Caco-2 (cell line): ENCODE measurements at regions of chr20 and their contacts with region 1.

Region 1: DNA sequence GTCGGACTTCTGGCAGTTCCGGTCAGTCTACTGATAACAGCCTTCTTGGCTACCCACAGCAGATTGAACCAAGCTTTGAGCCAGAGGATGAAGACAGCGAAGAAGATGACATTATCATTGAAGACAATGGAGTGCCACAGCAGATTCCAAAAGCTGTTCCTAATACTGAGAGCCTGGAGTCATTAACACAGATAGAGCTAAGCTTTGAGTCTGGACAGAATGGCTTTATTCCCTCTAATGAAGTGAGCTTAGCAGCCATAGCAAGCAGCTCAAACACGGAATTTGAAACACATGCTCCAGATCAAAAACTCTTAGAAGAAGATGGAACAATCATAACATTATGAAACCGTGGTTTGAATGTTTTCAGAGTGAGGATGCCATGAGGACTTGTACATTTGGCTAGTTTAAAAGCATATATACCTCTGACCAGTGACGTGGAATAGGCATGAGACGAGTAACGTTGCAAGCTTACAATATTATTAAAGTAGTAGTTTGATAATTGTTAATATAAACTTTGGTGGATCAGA is 18.8 kb downstream of the PARD6B start:
- DNase-seq: peak in 1 of 2 experiments; percentile 21
- H3K4me3 ChIP-seq: no peak overlapping the region
- H3K4me3 Mint-ChIP-seq: no peak overlapping the region
- H3K27ac Mint-ChIP-seq: peak overlapping the region; percentile 57
- H3K4me1 ChIP-seq: peaks cover 60% of the 10 kb centered on the region
- H3K4me1 Mint-ChIP-seq: peaks cover 59% of the 10 kb centered on the region
- H3K27me3 ChIP-seq: no peaks in the 10 kb centered on the region
- H3K27me3 Mint-ChIP-seq: no peaks in the 10 kb centered on the region
- CTCF ChIP-seq: no peak

Region 2: GRCh38 chr20:50534567-50535551 is 215.3 kb before region 1 on chr20:
- CTCF ChIA-PET with region 1: no interaction called
- POLR2A ChIA-PET with region 1: no interaction called
- intact Hi-C with region 1: no loop called
- DNase-seq: no peak
- H3K4me3 ChIP-seq: no peak overlapping the region
- H3K4me3 Mint-ChIP-seq: no peak overlapping the region
- H3K27ac Mint-ChIP-seq: peak overlapping the region; percentile 2
- H3K4me1 ChIP-seq: peaks cover 34% of the 10 kb centered on the region
- H3K4me1 Mint-ChIP-seq: peaks cover 37% of the 10 kb centered on the region
- H3K27me3 ChIP-seq: no peaks in the 10 kb centered on the region
- H3K27me3 Mint-ChIP-seq: no peaks in the 10 kb centered on the region
- CTCF ChIP-seq: no peak

Region 3: GRCh38 chr20:50670126-50670862 is 79.9 kb before region 1 on chr20:
- CTCF ChIA-PET with region 1: interaction called, 87 read pairs
- POLR2A ChIA-PET with region 1: interaction called, 3 read pairs
- intact Hi-C with region 1: no loop called
- DNase-seq: peak; percentile 86 to 89
- H3K4me3 ChIP-seq: no peak overlapping the region
- H3K4me3 Mint-ChIP-seq: no peak overlapping the region
- H3K27ac Mint-ChIP-seq: peak overlapping the region; percentile 71
- H3K4me1 ChIP-seq: peaks cover 82% of the 10 kb centered on the region
- H3K4me1 Mint-ChIP-seq: peaks cover 76% of the 10 kb centered on the region
- H3K27me3 ChIP-seq: no peaks in the 10 kb centered on the region
- H3K27me3 Mint-ChIP-seq: no peaks in the 10 kb centered on the region
- CTCF ChIP-seq: no peak

Region 4: GRCh38 chr20:50701551-50701963 is 48.7 kb before region 1 on chr20:
- CTCF ChIA-PET with region 1: interaction called, 10 read pairs
- POLR2A ChIA-PET with region 1: no interaction called
- intact Hi-C with region 1: no loop called
- DNase-seq: no peak
- H3K4me3 ChIP-seq: no peak overlapping the region
- H3K4me3 Mint-ChIP-seq: no peak overlapping the region
- H3K27ac Mint-ChIP-seq: peak overlapping the region; percentile 88
- H3K4me1 ChIP-seq: peaks cover 41% of the 10 kb centered on the region
- H3K4me1 Mint-ChIP-seq: peaks cover 46% of the 10 kb centered on the region
- H3K27me3 ChIP-seq: no peaks in the 10 kb centered on the region
- H3K27me3 Mint-ChIP-seq: no peaks in the 10 kb centered on the region
- CTCF ChIP-seq: no peak

Region 5: GRCh38 chr20:50731055-50731871 is 18.9 kb before region 1 on chr20 and contains the start of gene PARD6B:
- CTCF ChIA-PET with region 1: interaction called, 45 read pairs
- POLR2A ChIA-PET with region 1: interaction called, 15 read pairs
- intact Hi-C with region 1: no loop called
- DNase-seq: peak; percentile 100
- H3K4me3 ChIP-seq: peak within 1 kb of the TSS; percentile 78
- H3K4me3 Mint-ChIP-seq: peak within 1 kb of the TSS; percentile 88
- H3K27ac Mint-ChIP-seq: peak within 1 kb of the TSS; percentile 96
- H3K4me1 ChIP-seq: peaks cover 67% of the 10 kb centered on the region
- H3K4me1 Mint-ChIP-seq: peaks cover 46% of the 10 kb centered on the region
- H3K27me3 ChIP-seq: no peaks in the 10 kb centered on the region
- H3K27me3 Mint-ChIP-seq: no peaks in the 10 kb centered on the region
- CTCF ChIP-seq: peak in 1 of 2 experiments; percentile 19
- total RNA-seq, gene PARD6B: 153 and 156 TPM in 2 replicates